ENCODE measurements at regions of chr11 and their contacts with region 1.

Region 1: DNA sequence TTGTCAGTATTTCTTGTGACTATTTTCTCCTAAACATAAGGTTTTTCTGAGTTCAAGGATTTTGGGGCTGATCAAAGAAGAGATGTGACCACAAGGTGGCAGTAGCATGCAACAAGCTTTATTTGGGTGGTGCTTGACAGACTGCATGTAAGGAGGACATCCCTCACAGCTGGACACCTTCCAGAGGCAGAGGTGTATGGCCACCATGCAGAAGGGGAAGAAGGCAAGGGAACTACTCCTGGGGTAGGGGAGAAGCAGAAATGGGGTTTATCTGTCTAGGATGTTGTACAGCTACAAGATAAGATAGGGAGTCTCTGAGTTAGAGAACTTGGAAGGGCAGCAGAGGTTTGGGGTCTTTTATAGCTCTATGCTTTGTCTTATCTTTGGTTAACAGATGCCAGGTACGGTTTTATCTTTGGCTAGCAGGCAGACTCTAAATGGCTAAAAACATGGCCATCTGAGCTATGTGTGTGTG is 5.1 kb upstream of the BIRC2 start:
- DNase-seq: peak; percentile 71
- ATAC-seq: peak in 1 of 2 donors; percentile 63

Region 2: DNA sequence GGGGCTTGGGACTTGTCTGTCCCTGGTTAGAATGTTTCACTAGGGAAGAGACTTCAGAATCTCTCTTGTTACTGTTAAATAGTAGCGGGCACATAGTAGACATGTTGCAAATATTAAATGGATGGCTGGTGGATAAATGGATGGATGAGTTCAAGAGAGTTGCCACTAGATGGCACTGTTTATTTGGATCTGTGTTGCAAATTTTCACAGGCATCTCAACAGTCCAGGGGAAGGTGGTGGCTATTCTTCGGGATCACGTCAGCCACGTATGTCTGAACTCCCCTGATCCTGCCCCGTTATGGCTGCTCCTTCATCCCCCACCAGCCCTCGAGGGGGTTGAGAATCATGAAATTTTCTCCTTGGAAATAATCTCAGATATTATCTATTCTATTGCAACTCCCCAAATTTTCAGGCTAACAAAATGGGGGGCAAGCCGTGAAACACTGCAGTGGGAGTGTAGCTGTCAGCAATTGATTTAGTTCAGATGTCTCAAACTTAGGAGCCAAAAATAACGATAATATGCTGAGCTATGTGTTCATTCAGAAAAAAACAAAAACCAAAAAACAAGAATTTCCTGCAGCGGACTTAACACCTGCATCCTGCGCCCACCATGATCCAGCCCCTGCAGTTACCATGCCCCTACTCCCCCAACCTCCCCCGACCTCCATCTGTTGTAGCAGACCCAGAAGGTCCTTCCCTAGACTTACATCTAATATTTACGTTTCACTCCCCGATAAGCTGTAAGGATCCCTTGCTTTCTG is 53.7 kb before region 1 on chr11:
- intact Hi-C with region 1: loop called in 1 of 2 experiments (anchors 2 kb)
- DNase-seq: peak; percentile 41
- ATAC-seq: peak; percentile 84 to 90

Region 3: DNA sequence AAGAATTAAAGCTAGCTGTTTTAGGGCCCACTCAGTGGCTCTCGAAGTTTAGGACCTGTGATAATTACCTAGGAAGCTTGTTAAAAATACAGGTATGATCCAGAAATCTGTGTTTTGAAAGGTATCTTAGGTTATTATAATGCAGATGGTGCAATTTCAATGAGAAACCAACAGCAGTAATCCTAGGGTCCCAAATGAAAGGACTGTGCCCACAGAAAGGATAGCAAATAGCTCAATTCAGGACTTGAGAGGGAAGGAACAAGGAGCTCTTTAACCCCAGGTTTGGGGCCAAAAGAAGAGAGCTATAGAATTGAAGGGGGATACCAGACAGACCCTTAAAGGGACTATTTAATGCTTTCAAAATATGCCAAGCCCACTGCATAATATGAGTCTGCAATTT is 271.6 kb after region 1 on chr11:
- intact Hi-C with region 1: loop called in 1 of 2 experiments (anchors 2 kb)
- DNase-seq: no peak
- ATAC-seq: no peak

Measured in left cardiac atrium (tissue), 4 donors.